ENCODE measurements at regions of chr7 and their contacts with region 1.

Region 1: DNA sequence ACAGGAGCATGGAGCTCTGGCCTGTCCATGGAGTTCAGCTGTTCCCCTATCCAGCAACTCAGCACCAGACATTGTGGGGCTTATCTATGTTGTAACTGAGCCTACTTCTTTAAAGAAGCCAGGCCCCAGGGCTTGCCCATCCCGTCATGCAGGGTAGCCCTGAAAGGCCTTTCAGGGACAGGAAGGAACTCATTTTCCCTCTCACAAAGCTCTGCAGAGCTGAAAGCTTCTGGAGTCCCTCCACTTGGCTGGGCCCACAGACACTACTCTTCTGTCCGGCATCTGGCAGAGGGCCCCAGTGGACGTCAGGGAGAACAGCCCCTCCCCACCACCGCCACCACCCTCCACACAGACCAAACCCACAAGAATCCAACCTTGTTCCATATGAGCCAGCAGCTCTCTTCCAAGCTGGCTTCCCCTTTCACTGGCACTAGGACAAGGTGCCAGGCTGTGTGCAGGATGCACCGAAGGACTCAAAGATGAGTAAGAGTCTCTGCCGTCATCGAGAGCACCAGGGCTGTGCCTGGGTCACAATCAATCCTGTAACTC is 33.1 kb downstream of the DENND2A start:
- DNase-seq: no peak
- H3K4me3 ChIP-seq: no peak overlapping the region
- H3K27ac ChIP-seq: no peak overlapping the region
- H3K4me1 ChIP-seq: no peaks in the 10 kb centered on the region; a peak in 1 of 7 replicates
- H3K27me3 ChIP-seq: no peaks in the 10 kb centered on the region
- CTCF ChIP-seq: no peak
- EP300 ChIP-seq: no peak
- POLR2A ChIP-seq: no peak
- RAD21 ChIP-seq: no peak

Region 2: GRCh38 chr7:140596519-140597427 is 10.7 kb before region 1 on chr7:
- CTCF ChIA-PET with region 1: interaction called, 24 read pairs
- POLR2A ChIA-PET with region 1: interaction called, 4 read pairs
- DNase-seq: no peak
- H3K4me3 ChIP-seq: no peak overlapping the region
- H3K27ac ChIP-seq: no peak overlapping the region
- H3K4me1 ChIP-seq: no peaks in the 10 kb centered on the region
- H3K27me3 ChIP-seq: no peaks in the 10 kb centered on the region
- CTCF ChIP-seq: no peak
- EP300 ChIP-seq: no peak
- POLR2A ChIP-seq: no peak
- RAD21 ChIP-seq: no peak

Region 3: DNA sequence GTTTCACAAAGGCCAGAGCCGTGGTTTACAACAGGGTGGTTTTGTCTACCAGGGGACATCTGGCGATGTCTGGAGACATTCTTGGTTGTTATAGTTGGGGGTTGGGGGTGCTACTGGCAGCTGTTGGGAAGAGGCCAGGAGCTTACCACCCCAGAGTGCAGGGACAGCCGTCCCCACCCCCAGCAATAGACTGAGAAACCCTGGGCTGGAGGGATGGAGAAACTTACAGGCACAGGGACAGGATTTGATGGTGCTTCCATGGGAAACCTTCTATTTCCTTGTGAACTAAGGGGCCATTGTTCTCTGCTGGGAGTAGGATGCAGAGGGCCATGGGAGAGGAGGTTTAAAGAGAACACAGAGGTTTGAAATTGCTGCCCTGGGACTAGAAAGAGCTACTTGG is 76.1 kb after region 1 on chr7:
- CTCF ChIA-PET with region 1: no interaction called
- POLR2A ChIA-PET with region 1: no interaction called
- DNase-seq: no peak
- H3K4me3 ChIP-seq: no peak overlapping the region
- H3K27ac ChIP-seq: no peak overlapping the region
- H3K4me1 ChIP-seq: 0 out of 7 replicates have a peak, but pooled peaks cover 0 to 2% (median 0%) of the 10 kb centered on the region in 4 experiments
- H3K27me3 ChIP-seq: no peaks in the 10 kb centered on the region
- CTCF ChIP-seq: no peak
- EP300 ChIP-seq: no peak
- POLR2A ChIP-seq: no peak
- RAD21 ChIP-seq: no peak